ENCODE measurements at regions of chr1 and their contacts with region 1.

Region 1: DNA sequence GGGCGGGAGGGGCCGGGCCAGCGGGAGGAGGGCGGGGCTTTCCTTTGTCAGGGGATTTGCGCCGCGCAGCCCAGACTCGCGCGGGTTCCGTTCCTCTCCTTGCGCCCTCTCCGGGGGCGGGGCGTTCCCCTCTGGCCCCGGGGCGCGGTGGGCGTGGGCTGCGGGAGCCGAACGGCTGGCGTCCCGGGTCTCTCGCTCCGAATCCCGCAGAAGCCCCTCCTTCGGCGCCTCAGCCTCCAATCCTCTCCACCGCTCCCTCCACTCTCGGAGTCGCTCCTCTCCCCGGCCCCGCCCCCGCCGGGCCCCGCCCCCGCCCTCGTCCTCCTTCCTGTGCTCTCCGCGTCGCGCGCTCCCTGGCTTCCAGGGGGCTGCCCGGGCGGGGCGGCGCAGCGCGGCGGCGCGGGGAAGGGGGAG is 82.8 kb upstream of the BMP8A start:
- DNase-seq: peak; percentile 98
- H3K4me3 Mint-ChIP-seq: peak overlapping the region; percentile 95
- H3K27ac Mint-ChIP-seq: peak overlapping the region; percentile 93
- H3K4me1 Mint-ChIP-seq: peaks cover 39% of the 10 kb centered on the region
- H3K27me3 Mint-ChIP-seq: no peaks in the 10 kb centered on the region
- CTCF ChIP-seq: no peak

Region 2: GRCh38 chr1:39098546-39099250 is 309.9 kb before region 1 on chr1:
- CTCF ChIA-PET with region 1: interaction called, 10 read pairs
- intact Hi-C with region 1: no loop called
- DNase-seq: peak; percentile 78
- H3K4me3 Mint-ChIP-seq: no peak overlapping the region
- H3K27ac Mint-ChIP-seq: peak overlapping the region; percentile 60
- H3K4me1 Mint-ChIP-seq: peaks cover 25% of the 10 kb centered on the region
- H3K27me3 Mint-ChIP-seq: no peaks in the 10 kb centered on the region
- CTCF ChIP-seq: peak; percentile 75

Region 3: DNA sequence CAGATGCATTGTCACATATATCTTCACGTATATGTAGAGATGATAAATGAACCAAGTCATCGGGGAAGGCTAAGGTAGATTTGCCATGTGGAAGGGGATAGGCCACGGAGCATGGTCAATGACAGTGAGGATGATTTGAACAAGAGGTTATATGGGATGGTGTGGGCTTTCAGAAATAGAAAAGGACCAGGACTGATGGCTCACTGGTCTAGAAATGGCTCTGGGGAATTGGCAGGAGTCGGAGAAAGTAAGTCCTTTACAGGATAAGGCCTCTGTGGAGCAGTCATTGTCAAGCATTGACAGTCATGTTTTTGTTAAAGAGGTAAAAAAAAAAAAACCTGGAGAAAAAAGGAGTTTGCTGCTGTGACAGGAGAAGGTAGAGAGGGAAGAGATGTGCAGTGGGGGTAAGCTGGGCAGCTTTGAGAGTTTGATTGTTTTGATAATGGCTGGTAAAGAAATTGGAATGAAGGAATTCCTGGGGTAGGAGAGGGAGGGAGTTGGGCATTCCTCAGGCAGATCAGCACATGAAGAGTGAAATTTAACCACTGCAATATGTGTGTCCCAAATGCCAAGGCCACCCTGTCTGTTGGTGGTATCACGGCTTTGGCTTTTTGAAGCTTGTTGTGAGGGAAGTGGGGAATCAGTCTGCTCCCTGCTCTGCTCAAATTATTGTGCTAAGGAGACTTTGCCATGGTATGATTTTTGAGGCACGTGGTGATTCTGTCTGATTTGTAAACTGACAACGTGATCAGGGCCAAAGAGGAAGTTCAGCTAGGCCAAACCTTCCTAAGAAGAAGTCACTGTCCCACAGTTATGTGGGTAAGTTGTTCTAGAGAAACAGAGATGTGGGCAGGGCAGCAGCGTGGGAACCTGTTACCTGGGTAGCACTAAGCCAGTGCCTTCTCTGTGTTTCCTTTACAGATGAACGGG is 178.1 kb before region 1 on chr1:
- CTCF ChIA-PET with region 1: no interaction called
- intact Hi-C with region 1: no loop called
- DNase-seq: no peak
- H3K4me3 Mint-ChIP-seq: no peak overlapping the region
- H3K27ac Mint-ChIP-seq: no peak overlapping the region
- H3K4me1 Mint-ChIP-seq: peaks cover 8% of the 10 kb centered on the region
- H3K27me3 Mint-ChIP-seq: no peaks in the 10 kb centered on the region
- CTCF ChIP-seq: no peak

Region 4: GRCh38 chr1:39268112-39268581 is 140.5 kb before region 1 on chr1:
- CTCF ChIA-PET with region 1: no interaction called
- intact Hi-C with region 1: loop called (anchors 10 kb)
- DNase-seq: no peak
- H3K4me3 Mint-ChIP-seq: no peak overlapping the region
- H3K27ac Mint-ChIP-seq: no peak overlapping the region
- H3K4me1 Mint-ChIP-seq: peaks cover 18% of the 10 kb centered on the region
- H3K27me3 Mint-ChIP-seq: no peaks in the 10 kb centered on the region
- CTCF ChIP-seq: no peak

Region 5: DNA sequence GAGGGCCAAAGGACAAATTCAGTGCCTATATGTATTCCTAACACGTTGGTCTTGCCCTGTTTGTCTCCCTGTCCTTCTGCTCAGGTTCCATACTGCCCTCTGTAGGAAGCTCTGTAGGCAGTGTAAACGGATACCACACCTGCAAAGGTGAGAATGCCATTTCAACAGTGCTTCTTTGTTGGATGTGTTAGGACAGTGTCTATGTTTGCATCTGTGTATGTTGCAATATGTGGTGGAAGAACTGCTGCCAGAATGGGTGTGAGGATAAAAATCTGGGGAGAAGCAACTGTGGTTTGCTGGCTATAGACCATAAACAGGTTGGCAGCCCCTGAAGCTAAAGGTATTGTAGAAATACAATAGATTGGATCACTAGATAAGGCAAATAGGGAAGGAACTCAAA is 30.3 kb before region 1 on chr1:
- CTCF ChIA-PET with region 1: interaction called, 55 read pairs
- intact Hi-C with region 1: loop called (anchors 1 kb)
- DNase-seq: peak; percentile 74
- H3K4me3 Mint-ChIP-seq: no peak overlapping the region
- H3K27ac Mint-ChIP-seq: peak overlapping the region; percentile 26
- H3K4me1 Mint-ChIP-seq: peaks cover 16% of the 10 kb centered on the region
- H3K27me3 Mint-ChIP-seq: no peaks in the 10 kb centered on the region
- CTCF ChIP-seq: peak; percentile 46

Region 6: GRCh38 chr1:39391691-39392679 is 16.7 kb before region 1 on chr1:
- CTCF ChIA-PET with region 1: interaction called, 41 read pairs
- intact Hi-C with region 1: loop called (anchors 1 kb)
- DNase-seq: peak; percentile 57
- H3K4me3 Mint-ChIP-seq: peak overlapping the region; percentile 50
- H3K27ac Mint-ChIP-seq: peak overlapping the region; percentile 94
- H3K4me1 Mint-ChIP-seq: peaks cover 73% of the 10 kb centered on the region
- H3K27me3 Mint-ChIP-seq: no peaks in the 10 kb centered on the region
- CTCF ChIP-seq: no peak

Region 7: DNA sequence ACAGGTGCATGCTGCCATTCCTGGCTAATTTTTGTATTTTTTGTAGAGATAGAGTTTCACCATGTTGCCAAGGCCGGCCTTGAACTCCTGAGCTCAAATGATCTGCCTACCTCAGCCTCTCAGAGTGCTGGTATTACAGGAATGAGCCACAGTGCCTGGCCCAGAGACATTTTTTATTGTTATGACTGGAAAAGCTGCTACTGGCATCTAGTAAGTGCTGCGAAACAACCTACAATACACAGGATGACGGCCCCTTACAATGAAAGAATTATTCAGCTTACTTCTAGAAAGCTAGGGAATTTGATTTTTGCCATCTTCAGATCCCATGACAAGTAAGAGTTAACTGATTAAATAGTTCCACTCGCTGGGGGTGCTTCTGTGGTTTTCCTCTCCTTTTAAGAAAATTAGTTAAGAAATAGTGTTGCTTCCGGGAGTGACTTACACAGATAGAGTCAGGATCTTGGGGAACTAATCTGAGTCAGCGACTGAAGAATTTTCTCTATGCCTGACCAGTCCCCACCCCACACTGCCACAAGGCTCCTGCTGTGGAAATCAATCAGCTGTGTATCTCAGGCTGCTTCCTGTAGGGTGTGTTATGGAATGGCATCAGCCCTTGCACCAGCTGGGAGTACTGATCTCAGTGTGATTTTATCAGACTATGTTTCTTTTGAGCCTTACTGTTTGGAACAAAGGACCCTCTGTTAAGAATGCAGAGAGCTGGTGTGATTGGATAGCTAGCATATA is 10.2 kb before region 1 on chr1:
- CTCF ChIA-PET with region 1: interaction called, 41 read pairs
- intact Hi-C with region 1: loop called (anchors 1 kb)
- DNase-seq: peak; percentile 91
- H3K4me3 Mint-ChIP-seq: peak overlapping the region; percentile 40
- H3K27ac Mint-ChIP-seq: peak overlapping the region; percentile 94
- H3K4me1 Mint-ChIP-seq: peaks cover 81% of the 10 kb centered on the region
- H3K27me3 Mint-ChIP-seq: no peaks in the 10 kb centered on the region
- CTCF ChIP-seq: no peak

Region 8: GRCh38 chr1:39434797-39435395 is 26.2 kb after region 1 on chr1:
- CTCF ChIA-PET with region 1: interaction called, 10 read pairs
- intact Hi-C with region 1: no loop called
- DNase-seq: no peak
- H3K4me3 Mint-ChIP-seq: peak overlapping the region; percentile 18
- H3K27ac Mint-ChIP-seq: peak overlapping the region; percentile 76
- H3K4me1 Mint-ChIP-seq: peaks cover 53% of the 10 kb centered on the region
- H3K27me3 Mint-ChIP-seq: no peaks in the 10 kb centered on the region
- CTCF ChIP-seq: no peak